ENCODE measurements at regions of chr17 and their contacts with region 1.

Region 1: DNA sequence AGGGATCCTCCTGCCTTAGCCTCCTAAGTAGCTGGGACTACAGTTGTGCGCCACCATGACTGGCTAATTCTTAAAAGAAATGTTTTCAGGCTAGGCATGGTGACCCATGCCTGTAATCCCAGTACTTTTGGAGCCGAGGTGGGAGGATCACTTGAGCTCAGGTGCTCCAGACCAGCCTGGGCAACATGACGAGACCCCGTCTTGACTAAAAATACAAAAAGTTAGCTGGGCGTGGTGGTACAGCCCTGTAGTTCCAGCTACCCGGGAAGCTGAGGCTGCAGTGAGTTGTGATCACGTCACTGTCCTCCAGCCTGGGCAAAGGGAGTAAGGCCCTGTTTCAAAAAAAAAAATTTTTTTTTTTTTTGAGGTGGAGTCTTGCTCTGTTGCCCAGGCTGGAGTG is 173.1 kb downstream of the SEC14L1 start:
- DNase-seq: no peak
- ATAC-seq: no peak
- H3K4me3 ChIP-seq: no peak overlapping the region
- H3K27ac ChIP-seq: peak overlapping the region; percentile 99
- H3K4me1 ChIP-seq: peaks cover 94% of the 10 kb centered on the region
- H3K27me3 ChIP-seq: no peaks in the 10 kb centered on the region
- CTCF ChIP-seq: no peak

Region 2: DNA sequence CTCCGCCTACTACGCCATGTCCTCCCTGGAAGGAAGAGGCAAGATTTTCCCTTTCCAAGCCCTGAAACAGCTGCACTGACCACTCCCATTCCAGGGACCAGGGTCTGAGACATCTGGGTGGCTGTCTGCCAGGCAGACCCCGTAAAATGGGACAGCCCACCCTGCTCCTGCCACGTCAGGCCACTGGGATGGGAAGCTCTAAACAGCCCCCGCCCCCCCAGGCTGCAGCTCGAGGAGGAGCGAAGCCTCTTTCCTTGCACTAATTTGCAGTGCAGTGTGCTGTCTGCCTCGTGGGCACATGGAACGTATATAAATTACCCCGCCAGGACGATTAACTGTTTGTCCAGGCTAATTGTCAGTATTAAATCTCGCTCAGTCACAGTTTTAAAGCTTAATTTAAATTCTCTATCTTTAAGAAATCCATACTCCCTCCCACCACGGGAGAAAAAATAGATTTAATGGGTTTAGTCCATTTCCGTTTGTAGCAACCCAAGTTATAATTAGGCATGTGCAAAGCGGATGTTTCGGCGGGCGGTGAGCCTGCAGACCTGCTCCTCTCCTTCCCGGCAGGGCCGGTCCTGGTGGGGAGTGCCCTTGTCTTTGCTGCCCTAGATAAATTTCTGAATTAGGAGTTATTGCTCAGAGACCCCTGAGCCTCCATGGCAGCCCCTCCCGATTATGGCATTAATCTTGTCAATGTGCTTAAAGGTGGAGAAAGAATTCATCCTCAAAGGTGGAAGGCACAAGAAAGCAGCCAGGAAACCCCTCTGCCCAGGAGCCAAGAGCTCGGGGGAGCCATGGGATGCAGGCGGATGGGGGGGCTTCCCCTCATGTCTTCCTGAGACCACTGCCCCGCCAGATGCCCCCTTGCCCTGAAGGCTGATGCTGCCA is 376.7 kb after region 1 on chr17:
- CTCF ChIA-PET with region 1: no interaction called
- POLR2A ChIA-PET with region 1: interaction called, 11 read pairs
- in situ Hi-C with region 1: no loop called
- intact Hi-C with region 1: no loop called
- DNase-seq: no peak
- ATAC-seq: no peak
- H3K4me3 ChIP-seq: no peak overlapping the region
- H3K27ac ChIP-seq: no peak overlapping the region
- H3K4me1 ChIP-seq: no peaks in the 10 kb centered on the region
- H3K27me3 ChIP-seq: peaks cover 49% of the 10 kb centered on the region
- CTCF ChIP-seq: no peak

Measured in Panc1 (cell line).